Cardiac septum (tissue), 1 donor: ENCODE measurements at regions of chr12 and their contacts with region 1.

Region 1: GRCh38 chr12:85575120-85576096 is 260.8 kb downstream of the RASSF9 start:
- DNase-seq: no peak

Region 2: GRCh38 chr12:85260904-85261303 is 314.5 kb before region 1 on chr12:
- intact Hi-C with region 1: no loop called
- DNase-seq: no peak

Region 3: DNA sequence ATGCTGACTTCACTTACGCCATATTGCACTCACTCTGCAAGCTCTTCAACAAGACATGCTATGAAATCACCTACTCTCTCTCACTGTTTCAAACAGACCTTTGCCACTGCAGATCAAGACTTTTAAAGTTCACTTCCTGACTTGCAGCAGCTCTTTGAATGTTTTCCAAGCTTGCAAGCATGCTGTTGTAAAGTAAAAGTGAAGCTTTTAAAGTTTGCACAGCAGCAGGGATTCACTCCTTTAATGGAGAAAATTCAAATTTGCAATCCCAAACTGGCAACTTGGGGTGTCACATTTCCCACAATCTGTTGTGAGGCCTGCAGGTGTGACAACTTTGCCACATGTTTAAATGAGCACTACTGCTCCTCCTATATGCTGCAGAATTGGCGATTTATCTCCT is 24.5 kb before region 1 on chr12:
- intact Hi-C with region 1: no loop called
- DNase-seq: no peak

Region 4: GRCh38 chr12:85626001-85626781 is 50.8 kb after region 1 on chr12:
- intact Hi-C with region 1: no loop called
- DNase-seq: no peak

Region 5: GRCh38 chr12:85711735-85712390 is 136.5 kb after region 1 on chr12:
- intact Hi-C with region 1: no loop called
- DNase-seq: no peak

Region 6: DNA sequence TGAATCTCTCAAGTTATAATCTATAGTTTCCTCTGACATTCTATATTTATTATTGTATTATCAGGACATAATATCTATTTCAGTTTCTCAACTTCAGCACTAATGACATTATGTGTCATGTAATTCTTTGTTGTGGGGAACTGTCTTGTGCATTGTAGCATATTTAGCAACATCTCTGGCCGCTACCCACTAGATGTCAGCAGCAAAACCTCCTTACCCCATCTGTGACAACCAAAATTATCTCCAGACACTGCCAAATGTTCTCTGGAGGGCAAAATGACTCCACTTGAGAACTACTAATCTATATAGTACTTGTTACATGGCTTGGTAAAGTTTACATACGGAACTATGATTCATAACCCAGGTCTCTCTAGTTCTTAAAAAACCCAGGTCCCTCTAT is 150.6 kb after region 1 on chr12:
- intact Hi-C with region 1: loop called (anchors 10 kb)
- DNase-seq: no peak

Region 7: DNA sequence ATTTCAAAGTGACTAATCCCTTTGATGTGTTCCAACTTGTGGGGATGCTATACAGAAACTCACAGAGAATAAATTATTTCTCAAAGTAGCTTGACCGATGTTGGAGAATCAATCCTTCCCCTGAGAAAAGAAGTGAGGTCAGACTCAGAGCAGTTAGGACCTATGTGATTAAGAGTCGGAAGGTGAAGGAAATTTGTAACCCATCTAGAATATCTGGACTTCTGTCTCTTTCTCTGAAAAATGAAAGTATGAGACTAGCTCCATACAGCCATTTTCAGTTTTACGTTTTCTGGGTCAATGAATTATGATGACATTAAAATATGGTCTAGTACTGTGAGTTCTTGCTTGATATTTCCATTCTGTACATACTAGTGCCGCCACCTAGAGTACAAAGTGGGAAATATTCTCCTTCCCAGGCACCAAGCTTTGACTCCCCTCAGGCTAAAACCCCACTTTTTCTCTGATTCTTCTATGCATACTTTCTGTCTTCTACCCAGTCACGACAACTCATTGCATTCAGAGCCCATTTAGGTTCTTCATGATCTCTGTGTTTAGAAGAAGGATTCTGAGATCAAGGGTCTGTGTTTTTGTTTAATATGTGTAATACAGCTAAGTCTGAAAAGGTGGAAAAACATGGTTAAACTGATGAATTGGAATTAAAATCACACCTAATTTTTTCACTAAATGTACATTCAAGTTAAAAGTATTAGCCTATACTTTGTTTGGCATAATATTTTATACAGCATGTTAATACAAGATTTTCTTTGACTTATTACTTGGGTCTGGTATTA is 291.8 kb after region 1 on chr12:
- intact Hi-C with region 1: loop called (anchors 2 kb)
- DNase-seq: no peak